Heart right ventricle (tissue), 16 donors: ENCODE measurements at regions of chr3 and their contacts with region 1.

Region 1: DNA sequence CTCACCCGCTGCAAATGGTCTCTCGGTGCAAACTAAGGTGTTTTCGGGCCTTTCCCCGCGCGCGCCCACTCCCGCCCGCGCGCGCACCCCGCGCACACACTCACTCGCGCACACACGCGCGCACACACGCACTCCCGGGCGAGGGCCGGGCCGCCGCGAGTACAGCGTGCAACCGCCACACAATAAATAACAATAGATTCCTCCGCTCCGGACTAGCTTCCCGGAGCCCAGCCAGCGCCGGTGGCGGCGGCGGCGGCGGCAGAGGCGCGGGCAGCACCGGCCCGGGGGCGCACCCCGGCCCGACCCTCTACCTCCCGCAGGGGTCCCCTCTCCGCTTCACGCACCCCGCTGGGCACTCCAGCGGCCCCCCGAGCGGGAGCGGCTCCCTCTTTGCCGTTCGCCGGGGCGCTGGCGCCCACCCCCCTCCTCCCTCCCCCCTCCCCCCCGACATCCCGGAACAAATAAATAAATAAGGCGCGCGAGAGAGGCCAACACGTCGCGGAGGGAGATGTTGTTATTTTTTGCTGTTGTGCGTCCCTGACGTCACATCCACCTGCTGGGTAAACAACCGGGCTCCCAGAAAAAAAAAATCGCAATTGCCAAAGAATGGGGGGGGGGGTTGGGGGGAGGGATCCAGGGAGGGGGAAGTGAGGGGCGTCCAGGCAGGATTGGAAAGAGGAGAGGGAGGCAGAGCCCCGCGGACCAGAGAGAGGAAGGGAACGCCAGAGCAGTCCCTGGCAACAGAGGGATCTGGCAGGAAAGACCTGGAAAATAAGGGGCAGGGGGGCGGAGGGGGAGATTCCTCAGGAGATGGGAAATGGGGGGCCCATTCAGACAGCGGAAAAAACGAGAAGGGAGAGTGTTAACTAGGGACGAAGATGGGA is at the start of gene FOXP1:
- DNase-seq: peak; percentile 75 to 84
- ATAC-seq: peak; percentile 65 to 84 (median 72)
- H3K4me3 ChIP-seq: peak within 1 kb of the TSS; percentile 63 to 93 (median 81)
- H3K27ac ChIP-seq: peak within 1 kb of the TSS; percentile 95 to 99 (median 98)
- H3K4me1 ChIP-seq: peaks cover 0 to 48% (median 36%) of the 10 kb centered on the region in 9 donors
- H3K27me3 ChIP-seq: no peaks in the 10 kb centered on the region
- CTCF ChIP-seq: no peak
- total RNA-seq, gene FOXP1: 36.1 to 56.0 (median 46.1) TPM

Region 2: DNA sequence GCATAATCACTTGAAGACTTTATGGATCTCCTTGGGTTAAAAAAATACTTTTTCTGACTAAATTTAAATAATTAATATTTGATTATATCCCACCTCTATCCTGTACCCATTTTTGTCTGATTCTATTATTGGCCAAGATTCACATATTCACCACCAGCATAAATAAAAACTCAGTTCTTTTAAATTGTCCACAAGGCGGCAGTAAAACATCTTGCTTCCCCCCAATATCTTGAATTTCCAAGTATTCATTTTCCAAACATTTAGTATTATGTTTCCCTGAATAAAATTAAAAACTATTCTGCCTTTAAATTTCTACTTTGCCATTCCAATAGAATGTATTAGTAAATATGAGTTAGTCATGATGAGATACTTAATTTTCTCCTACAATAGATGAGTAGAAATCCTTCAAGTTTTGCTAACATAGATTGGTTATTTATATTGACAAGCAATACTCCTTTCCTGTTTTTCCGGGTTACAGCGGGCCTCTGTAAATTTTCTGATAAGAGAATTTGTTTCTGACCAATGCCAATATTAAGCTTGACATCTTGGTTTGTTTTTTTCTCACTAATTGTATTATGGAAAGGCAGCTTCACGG is 1052.6 kb before region 1 on chr3:
- intact Hi-C with region 1: loop called in 2 of 10 experiments (anchors 2 to 5 kb)
- DNase-seq: no peak
- ATAC-seq: no peak
- H3K4me3 ChIP-seq: no peak overlapping the region
- H3K27ac ChIP-seq: no peak overlapping the region
- H3K4me1 ChIP-seq: no peaks in the 10 kb centered on the region
- H3K27me3 ChIP-seq: peaks cover 0 to 10% (median 4%) of the 10 kb centered on the region in 7 donors
- CTCF ChIP-seq: peak in 8 of 9 donors; percentile 31 to 70 (median 58)

Region 3: DNA sequence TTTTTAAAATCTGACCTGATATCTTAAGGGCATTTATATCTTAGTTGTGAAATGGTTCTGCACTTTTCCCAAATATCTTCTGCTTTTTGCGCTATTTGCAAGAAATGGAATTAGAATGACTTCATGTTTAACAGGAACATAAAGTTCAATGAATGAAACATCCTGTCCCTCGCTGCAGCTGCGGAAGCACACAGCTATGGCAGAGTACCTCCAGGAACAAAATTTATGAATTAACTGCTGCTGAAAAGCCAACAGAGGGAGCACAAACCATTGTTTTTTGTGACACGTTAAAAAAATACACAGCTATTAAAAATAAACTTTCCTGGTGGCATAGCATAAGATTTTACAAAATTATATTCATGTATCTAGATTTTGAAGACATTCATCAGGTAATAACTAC is 867.0 kb before region 1 on chr3:
- intact Hi-C with region 1: loop called in 7 of 10 experiments (anchors 1 to 10 kb)
- DNase-seq: peak; percentile 14 to 32
- ATAC-seq: peak in 5 of 8 donors; percentile 49 to 88 (median 62)
- H3K4me3 ChIP-seq: no peak overlapping the region
- H3K27ac ChIP-seq: no peak overlapping the region
- H3K4me1 ChIP-seq: no peaks in the 10 kb centered on the region
- H3K27me3 ChIP-seq: no peaks in the 10 kb centered on the region
- CTCF ChIP-seq: peak; percentile 17 to 72 (median 54)

Region 4: DNA sequence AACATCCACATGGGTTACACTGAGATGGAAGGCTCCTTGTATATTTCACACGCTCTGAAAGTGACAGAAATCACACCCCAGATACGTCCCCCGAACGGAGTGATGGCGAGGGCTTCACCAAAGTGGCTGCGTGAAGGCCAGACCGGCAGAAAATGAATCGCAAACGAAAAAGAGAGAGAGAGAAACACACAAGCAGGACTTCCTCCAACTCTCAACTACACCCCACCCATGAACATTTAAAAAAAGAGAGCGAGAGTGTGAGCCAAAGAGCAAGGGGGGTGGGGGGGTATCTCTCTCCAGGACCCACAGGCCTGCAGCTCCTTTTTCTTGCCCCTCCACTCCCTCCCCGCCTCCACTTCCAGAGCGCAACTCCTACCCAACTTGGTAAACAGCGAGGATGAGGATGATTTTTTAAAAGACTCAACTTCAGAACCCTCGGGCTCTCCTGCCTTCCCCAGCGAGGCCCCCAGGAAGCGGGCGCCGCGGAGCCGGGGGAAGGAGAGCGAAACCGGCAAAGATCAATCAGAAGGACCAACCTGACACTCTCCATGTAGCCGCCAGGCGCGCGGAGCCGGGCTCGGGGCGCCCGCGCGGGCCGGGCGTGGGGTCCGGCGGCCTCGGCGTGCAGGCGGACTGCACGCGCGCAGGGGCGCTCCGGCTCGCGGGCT is 519.4 kb before region 1 on chr3:
- intact Hi-C with region 1: loop called in 7 of 10 experiments (anchors 5 to 10 kb)
- DNase-seq: peak in 1 of 2 donors; percentile 50
- ATAC-seq: peak; percentile 35 to 72 (median 56)
- H3K4me3 ChIP-seq: peak overlapping the region; percentile 26 to 78 (median 68)
- H3K27ac ChIP-seq: peak overlapping the region; percentile 66 to 98 (median 94)
- H3K4me1 ChIP-seq: peaks cover 5 to 73% (median 58%) of the 10 kb centered on the region in 9 donors
- H3K27me3 ChIP-seq: no peaks in the 10 kb centered on the region
- CTCF ChIP-seq: no peak

Region 5: DNA sequence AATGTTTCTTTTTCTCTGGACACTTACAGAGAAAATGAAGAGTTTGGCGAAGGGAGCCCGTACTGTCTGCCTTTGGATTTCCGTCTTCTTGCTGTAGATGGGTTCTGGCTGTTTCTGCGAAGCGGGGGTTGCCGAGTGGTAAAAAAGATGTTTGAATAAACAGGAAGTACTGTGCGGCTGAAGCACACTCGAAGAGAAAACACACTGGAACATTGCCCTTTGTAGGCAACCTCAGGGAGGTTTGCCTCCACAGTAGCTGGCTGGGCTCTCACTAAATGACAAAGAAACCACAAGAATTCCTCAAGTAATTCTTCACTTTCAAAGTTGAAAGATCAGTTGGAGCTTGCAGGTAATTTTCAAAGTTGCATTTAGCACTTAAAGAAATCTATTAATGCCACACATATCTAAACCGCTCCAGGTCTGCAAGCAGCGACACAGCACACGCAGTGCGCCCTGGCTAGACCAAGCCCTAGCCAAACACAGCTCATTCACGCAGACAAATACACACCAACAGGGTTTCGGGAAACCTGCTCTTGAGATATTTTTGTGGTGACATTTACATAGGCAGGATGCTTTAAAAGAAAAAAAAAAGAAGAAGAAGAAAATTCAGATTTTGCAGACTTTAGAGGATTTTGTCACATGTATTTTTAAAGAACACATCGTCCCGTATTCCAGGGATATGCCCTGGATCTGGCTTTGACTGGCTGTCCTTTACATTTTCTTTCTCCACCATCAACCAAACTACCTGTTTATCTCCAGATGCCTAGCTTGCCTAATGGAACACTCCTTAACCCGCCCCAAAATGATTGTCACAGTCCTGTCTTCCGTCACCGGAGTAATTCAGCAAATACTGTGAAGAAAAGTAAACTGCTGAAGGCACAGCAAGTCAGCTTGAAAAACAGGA is 453.1 kb before region 1 on chr3:
- intact Hi-C with region 1: loop called in 5 of 10 experiments (anchors 5 to 10 kb)
- DNase-seq: peak; percentile 33 to 66
- ATAC-seq: peak; percentile 48 to 80 (median 72)
- H3K4me3 ChIP-seq: peak overlapping the region; percentile 33 to 65 (median 58)
- H3K27ac ChIP-seq: peak overlapping the region; percentile 74 to 94 (median 87)
- H3K4me1 ChIP-seq: peaks cover 10 to 82% (median 62%) of the 10 kb centered on the region in 9 donors
- H3K27me3 ChIP-seq: no peaks in the 10 kb centered on the region
- CTCF ChIP-seq: no peak

Region 6: DNA sequence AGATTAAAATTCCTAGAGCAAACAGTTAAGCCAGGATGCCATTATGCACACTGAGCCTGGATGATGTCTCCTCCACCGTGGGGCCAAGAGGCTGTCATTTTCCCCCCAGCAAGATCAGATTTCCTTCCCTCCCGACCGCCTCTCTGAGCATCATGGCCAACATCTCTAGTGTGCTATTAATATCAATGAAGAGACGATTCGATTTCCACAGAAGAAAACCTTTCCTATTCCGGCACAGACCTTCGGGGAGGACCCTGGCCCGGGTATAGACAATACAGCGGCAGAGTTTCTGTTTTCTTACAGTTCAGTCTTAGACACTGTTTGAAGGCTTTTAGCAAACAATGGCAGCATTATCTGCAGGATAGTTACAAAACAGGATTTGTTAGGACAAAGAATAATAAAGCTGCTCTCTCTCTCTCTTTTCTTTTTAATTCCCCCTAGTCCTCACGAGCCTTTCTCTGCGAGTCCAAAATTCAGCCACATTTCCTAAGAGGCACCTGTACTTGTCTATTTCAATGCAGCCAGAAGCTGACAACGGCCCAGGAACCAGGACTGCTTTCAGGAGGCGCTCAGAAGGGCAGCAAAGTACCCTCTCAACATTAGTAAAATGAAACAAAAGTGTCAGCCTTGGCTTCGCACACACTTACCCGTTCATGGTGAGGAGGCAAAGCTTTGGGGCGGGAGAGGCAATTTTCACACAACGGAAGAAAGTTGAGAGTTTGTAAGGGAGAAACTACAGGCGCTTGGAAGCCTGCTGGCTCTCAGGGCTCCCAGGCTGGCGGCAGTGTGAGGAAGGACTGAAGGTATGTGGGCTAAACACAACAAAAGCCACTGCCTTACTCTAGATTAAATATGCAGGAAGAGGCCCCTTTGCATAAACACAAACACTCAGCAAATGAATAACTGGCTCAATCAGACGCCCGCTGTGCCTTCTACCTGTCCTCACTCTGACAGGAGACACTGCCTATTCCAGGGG is 278.3 kb before region 1 on chr3:
- intact Hi-C with region 1: loop called in 8 of 10 experiments (anchors 2 to 10 kb)
- DNase-seq: peak; percentile 21 to 42
- ATAC-seq: peak; percentile 68 to 94 (median 90)
- H3K4me3 ChIP-seq: peak overlapping the region in 9 of 10 donors; percentile 17 to 54 (median 41)
- H3K27ac ChIP-seq: peak overlapping the region; percentile 3 to 81 (median 72)
- H3K4me1 ChIP-seq: peaks cover 0 to 54% (median 36%) of the 10 kb centered on the region in 9 donors
- H3K27me3 ChIP-seq: no peaks in the 10 kb centered on the region
- CTCF ChIP-seq: no peak

Region 7: DNA sequence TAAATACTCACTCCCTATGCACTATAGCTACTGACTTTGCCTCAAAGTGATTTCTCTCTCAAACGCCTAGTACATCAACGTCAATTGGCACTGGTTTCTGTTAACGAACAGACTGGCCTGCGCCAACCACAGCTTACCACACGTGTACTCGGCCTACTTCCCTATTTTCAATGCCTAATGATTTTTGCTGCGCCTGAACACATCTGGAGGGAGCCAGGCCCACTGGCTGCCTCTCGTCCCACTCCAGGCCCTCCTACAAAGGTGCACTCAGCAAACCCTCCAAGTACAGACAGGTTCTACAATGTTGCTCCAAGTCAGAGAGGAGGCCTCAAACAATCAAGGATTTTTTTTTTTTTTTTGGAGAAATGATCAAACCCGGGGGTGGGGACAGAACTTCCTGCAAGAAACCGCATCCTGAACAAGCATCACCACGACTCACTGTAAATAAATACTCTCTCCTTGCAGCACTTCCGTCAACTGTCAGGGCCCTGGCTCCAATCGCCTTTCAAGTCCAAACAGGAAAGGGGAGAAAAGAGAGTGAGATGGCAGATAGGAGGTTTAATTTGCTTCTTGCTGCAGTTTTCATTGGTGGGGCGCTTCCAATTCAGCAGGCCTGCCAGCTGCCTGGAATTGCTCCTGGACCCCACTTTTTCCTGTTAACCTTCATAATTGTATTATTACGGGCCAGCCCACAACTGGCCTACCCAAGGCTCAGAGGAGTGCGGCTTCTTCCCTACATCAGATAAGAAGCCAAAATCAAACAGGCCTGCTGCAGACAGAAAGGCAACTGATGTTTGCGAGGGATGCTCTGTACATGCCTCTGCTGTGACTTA is 139.6 kb before region 1 on chr3:
- intact Hi-C with region 1: loop called in 1 of 10 experiments (anchors 10 kb)
- DNase-seq: peak in 1 of 2 donors; percentile 47
- ATAC-seq: peak; percentile 46 to 85 (median 73)
- H3K4me3 ChIP-seq: peak overlapping the region in 1 of 10 donors; percentile 12
- H3K27ac ChIP-seq: peak overlapping the region; percentile 10 to 89 (median 60)
- H3K4me1 ChIP-seq: peaks cover 4 to 90% (median 50%) of the 10 kb centered on the region in 9 donors
- H3K27me3 ChIP-seq: no peaks in the 10 kb centered on the region
- CTCF ChIP-seq: no peak

Region 8: DNA sequence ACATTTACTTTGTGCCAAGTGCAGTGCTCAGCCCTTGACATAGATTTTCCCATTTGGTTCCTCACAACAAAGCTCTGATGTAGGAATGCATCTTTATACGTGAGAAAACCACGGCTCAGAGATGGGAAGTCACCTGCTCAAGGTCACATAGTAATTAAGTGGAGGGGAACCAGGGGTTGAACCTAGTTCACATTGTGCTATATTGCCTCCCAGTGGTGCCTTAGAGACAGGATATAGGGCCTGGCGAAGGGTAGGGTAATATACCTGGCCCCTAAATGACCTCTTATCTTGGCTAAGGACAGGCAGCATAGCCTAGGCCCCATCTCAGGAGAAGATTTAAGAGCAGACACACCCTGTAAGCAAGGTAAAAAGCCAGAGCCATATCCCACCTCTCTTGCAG is 71.8 kb before region 1 on chr3:
- intact Hi-C with region 1: no loop called
- DNase-seq: no peak
- ATAC-seq: peak in 2 of 8 donors; percentile 39 to 40
- H3K4me3 ChIP-seq: no peak overlapping the region
- H3K27ac ChIP-seq: peak overlapping the region in 1 of 10 donors; percentile 44
- H3K4me1 ChIP-seq: peaks cover 0 to 41% (median 9%) of the 10 kb centered on the region in 9 donors
- H3K27me3 ChIP-seq: no peaks in the 10 kb centered on the region
- CTCF ChIP-seq: peak in 3 of 9 donors; percentile 8 to 34 (median 17)